ENCODE measurements at regions of chr19 and their contacts with region 1.

Region 1: GRCh38 chr19:2950286-2951124 is 5.7 kb upstream of the ZNF77 start:
- DNase-seq: peak; percentile 98
- ATAC-seq: peak; percentile 86
- H3K4me3 ChIP-seq: peak overlapping the region; percentile 87
- H3K27ac ChIP-seq: peak overlapping the region; percentile 47
- H3K4me1 ChIP-seq: peaks cover 17% of the 10 kb centered on the region; the same call in 1 of the 2 replicates
- H3K27me3 ChIP-seq: no peaks in the 10 kb centered on the region
- CTCF ChIP-seq: no peak

Region 2: DNA sequence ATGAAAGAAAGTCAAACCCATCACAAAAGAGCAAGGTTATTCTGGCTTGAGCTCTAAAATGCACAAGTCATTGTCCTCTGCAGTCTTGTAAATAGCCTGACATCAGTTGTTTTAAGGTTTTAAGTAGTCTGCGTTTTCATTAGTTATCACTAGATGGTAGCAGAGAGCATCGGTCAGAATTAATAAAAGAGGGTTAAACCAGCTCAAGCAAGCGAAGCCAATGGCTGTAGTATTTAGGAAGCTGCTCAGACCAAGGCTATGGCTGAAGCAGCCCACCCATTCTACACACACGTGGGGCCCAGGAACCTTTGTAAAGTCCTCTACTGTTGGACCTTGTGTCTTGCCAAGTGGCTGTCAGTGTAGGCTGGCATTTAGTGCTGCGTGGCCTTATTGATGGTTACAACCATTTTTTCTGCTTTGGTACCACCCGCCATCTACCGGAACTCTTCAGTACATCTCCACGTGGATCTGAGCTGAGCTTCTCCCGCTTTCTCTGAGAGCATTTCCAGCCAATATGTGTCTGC is 63.1 kb before region 1 on chr19:
- CTCF ChIA-PET with region 1: interaction called, 11 read pairs
- POLR2A ChIA-PET with region 1: interaction called, 5 read pairs
- intact Hi-C with region 1: loop called (anchors 2 kb)
- DNase-seq: peak; percentile 79
- ATAC-seq: peak; percentile 89
- H3K4me3 ChIP-seq: peak overlapping the region; percentile 55
- H3K27ac ChIP-seq: no peak overlapping the region
- H3K4me1 ChIP-seq: peaks cover 5% of the 10 kb centered on the region; the same call in 1 of the 2 replicates
- H3K27me3 ChIP-seq: no peaks in the 10 kb centered on the region
- CTCF ChIP-seq: peak; percentile 66

Region 3: GRCh38 chr19:2923510-2923909 is 27.0 kb before region 1 on chr19:
- CTCF ChIA-PET with region 1: interaction called, 7 read pairs
- POLR2A ChIA-PET with region 1: no interaction called
- intact Hi-C with region 1: loop called (anchors 2 kb)
- DNase-seq: peak; percentile 73
- ATAC-seq: peak; percentile 75
- H3K4me3 ChIP-seq: 0 out of 2 replicates have a peak overlapping the region, but pooled peaks have one; percentile 23
- H3K27ac ChIP-seq: peak overlapping the region; percentile 74
- H3K4me1 ChIP-seq: peaks cover 18% of the 10 kb centered on the region
- H3K27me3 ChIP-seq: no peaks in the 10 kb centered on the region
- CTCF ChIP-seq: no peak

Region 4: GRCh38 chr19:3094601-3095437 is 144.3 kb after region 1 on chr19:
- CTCF ChIA-PET with region 1: no interaction called
- POLR2A ChIA-PET with region 1: no interaction called
- intact Hi-C with region 1: loop called (anchors 10 kb)
- DNase-seq: no peak
- ATAC-seq: no peak
- H3K4me3 ChIP-seq: peak overlapping the region; percentile 91
- H3K27ac ChIP-seq: no peak overlapping the region
- H3K4me1 ChIP-seq: peaks cover 7% of the 10 kb centered on the region; the same call in 1 of the 2 replicates
- H3K27me3 ChIP-seq: no peaks in the 10 kb centered on the region
- CTCF ChIP-seq: no peak

Region 5: DNA sequence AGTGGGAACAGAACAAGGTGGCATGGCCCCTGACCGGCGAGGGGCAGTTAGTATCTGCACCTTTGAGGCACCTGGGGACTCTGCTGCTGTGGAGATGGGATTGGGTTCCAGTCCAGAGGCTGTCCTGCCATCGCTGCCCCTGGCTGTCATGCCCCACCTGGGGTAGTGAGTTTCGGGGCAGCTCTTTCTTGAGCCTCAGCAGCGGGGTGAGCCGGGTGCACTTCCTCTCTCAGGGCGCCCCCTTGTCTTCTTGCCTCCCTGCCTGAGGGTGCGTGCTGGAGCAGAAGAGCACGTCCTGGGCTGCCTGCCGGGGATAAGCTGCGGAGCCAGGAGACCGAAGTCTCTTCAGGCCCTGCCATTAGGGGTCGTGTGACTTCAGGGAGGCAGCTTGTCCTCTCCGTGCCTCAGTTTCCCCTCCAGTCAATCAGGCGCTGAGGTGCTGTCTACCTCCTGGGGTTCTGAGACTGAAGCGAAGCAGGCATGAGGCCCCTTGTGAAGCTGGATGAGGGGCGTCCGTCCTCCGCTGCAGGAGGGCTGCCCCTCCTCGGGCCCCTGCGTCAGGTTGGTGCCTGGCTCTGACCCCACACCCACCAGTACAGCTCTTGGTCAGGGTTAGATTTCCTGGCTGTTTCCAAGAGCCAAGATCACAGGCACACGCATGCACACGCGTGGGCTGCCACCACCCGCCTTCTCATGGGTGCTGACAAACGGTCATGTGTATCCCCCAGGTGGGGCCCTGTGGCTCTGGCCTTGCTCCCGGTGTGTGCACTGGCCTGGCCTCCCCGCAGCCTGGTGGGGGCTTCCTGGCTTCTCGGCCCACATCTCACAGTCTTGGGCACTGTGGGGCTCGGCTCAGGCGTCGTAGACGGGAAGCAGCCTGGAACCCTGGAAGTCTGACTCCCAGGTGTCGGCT is 152.0 kb after region 1 on chr19:
- CTCF ChIA-PET with region 1: interaction called, 14 read pairs
- POLR2A ChIA-PET with region 1: no interaction called
- intact Hi-C with region 1: loop called (anchors 10 kb)
- DNase-seq: no peak
- ATAC-seq: no peak
- H3K4me3 ChIP-seq: no peak overlapping the region
- H3K27ac ChIP-seq: no peak overlapping the region
- H3K4me1 ChIP-seq: no peaks in the 10 kb centered on the region
- H3K27me3 ChIP-seq: no peaks in the 10 kb centered on the region
- CTCF ChIP-seq: no peak

Region 6: GRCh38 chr19:3125900-3126524 is 175.5 kb after region 1 on chr19:
- CTCF ChIA-PET with region 1: interaction called, 7 read pairs
- POLR2A ChIA-PET with region 1: no interaction called
- intact Hi-C with region 1: loop called (anchors 5 kb)
- DNase-seq: peak; percentile 65
- ATAC-seq: peak; percentile 86
- H3K4me3 ChIP-seq: no peak overlapping the region
- H3K27ac ChIP-seq: no peak overlapping the region
- H3K4me1 ChIP-seq: no peaks in the 10 kb centered on the region
- H3K27me3 ChIP-seq: no peaks in the 10 kb centered on the region
- CTCF ChIP-seq: peak; percentile 71

Region 7: GRCh38 chr19:4911786-4912672 is 1961.5 kb after region 1 on chr19:
- CTCF ChIA-PET with region 1: no interaction called
- POLR2A ChIA-PET with region 1: interaction called, 18 read pairs
- intact Hi-C with region 1: no loop called
- DNase-seq: peak; percentile 99
- ATAC-seq: peak; percentile 59
- H3K4me3 ChIP-seq: peak overlapping the region; percentile 78
- H3K27ac ChIP-seq: peak overlapping the region; percentile 81
- H3K4me1 ChIP-seq: peaks cover 59% of the 10 kb centered on the region
- H3K27me3 ChIP-seq: no peaks in the 10 kb centered on the region
- CTCF ChIP-seq: peak; percentile 88

Measured in PC-3 (cell line).